GM10248 (cell line): ENCODE measurements at regions of chr5 and their contacts with region 1.

Region 1: DNA sequence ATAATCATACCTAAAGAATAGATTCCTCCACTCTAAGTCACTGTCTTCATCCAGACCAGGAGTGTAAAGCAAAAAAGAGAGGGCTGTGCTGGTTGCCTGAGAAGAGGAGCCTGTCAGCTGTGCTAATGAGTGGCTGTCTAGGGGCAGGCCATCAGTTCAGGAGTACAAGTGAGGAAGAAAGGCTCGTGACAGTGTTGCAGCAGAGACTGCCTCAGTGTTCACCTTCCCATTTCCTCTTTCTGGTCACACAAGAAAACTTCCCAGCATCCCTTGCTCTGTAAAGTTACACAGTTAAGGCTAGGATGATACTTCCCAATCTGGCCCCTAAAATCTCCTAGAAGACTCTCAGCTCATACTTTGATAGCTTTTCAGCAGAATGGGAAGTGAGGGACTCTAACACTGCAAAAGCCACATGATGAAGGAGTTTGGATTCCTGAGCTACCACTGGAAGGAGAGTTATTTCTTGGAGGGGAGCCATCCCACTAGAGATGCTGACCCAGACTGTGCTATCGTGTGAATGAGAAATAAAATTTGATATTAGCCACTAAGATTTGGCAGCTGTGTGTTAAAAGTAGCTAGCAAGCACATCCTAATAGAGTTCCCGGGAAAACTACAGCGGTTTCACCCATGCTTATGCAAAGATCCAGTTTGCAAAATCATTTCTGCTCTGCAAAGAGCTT is 67.1 kb downstream of the ADAMTS12 start:
- DNase-seq: no peak
- CTCF ChIP-seq: no peak

Region 2: GRCh38 chr5:33761139-33761538 is 63.5 kb before region 1 on chr5:
- CTCF ChIA-PET with region 1: no interaction called
- POLR2A ChIA-PET with region 1: no interaction called
- DNase-seq: no peak
- CTCF ChIP-seq: no peak

Region 3: DNA sequence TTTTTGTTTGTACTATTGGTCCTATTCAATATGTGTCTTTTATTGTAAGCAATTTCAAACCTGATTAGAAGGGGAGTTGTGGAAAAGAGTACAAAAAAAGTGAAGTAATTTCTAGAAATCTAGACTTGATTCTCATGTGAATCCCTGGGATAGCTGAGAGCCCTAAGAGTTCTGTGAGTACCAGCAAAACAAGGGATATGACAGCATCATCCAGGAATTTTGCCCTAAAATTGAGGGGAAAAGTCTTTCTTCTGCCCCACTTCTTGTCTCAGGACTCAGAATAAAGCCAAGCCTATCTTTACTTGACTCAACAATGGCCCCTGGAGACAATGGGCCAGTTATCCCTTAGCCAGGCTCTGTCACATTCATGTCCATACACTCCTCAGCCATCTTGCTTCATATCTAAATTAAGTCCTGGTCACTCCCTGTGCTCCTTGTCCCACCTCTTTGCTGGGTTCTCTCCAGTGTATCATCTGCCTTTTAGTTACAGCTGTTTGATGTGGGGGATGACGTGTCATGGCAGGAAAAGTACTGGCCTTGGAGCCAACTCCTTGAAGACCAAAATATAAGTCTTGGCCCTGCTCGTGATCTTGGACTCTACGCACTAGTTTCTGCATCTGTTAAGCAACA is 14.1 kb before region 1 on chr5:
- CTCF ChIA-PET with region 1: interaction called, 29 read pairs
- POLR2A ChIA-PET with region 1: no interaction called
- DNase-seq: no peak
- CTCF ChIP-seq: no peak